ENCODE measurements at regions of chr6 and their contacts with region 1.

Region 1: DNA sequence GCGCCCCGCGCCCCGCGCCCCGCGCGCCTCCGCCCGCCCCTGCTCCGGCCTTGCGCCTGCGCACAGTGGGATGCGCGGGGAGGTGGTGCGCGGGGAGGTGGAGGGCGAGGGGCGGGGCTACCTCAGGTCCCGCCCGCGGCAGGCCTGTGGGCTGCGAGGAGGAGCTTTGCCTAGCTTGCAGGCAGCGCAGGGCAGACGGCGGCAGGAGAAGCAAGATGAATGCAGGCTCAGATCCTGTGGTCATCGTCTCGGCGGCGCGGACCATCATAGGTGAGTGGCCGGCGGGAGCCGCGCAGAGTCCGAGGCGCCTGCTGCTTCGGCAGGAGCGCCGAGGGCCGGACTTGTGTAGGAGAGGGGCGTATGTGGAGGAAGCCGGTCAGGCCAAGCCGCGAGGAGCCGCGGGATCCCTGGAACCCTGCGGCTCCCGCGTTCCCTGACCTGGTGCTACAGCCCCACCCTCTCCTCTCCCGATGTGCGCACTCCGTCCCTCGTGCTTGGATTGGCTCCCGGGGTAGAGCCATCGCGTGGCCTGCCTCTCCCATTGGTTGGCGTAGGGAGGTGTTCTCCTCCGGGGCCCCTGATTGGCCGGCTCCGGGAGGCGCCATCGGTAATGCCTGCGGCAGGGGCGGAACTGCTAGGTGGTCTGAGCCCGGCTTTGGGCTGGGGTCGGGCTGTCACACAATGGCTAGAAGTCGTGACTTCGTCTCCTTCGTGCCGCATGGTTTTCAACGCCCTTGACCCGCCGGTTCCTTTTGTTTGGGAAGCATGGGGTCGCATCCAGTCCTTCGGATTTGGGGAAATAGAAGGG is at the start of gene ACAT2:
- DNase-seq: peak; percentile 79 to 95 (median 90)
- ATAC-seq: peak; percentile 92 to 97 (median 95)
- H3K4me3 ChIP-seq: peak within 1 kb of the TSS; percentile 91 to 97
- H3K4me3 Mint-ChIP-seq: peak within 1 kb of the TSS; percentile 91 to 94 (median 94)
- H3K27ac ChIP-seq: peak within 1 kb of the TSS; percentile 98
- H3K27ac Mint-ChIP-seq: peak within 1 kb of the TSS; percentile 96 to 97
- H3K4me1 ChIP-seq: peaks cover 10 to 16% of the 10 kb centered on the region in 2 experiments
- H3K4me1 Mint-ChIP-seq: peaks cover 23 to 31% (median 29%) of the 10 kb centered on the region in 3 donors
- H3K27me3 ChIP-seq: no peaks in the 10 kb centered on the region
- H3K27me3 Mint-ChIP-seq: no peaks in the 10 kb centered on the region
- total RNA-seq, gene ACAT2: 21.5 to 28.2 (median 27.4) TPM

Region 2: DNA sequence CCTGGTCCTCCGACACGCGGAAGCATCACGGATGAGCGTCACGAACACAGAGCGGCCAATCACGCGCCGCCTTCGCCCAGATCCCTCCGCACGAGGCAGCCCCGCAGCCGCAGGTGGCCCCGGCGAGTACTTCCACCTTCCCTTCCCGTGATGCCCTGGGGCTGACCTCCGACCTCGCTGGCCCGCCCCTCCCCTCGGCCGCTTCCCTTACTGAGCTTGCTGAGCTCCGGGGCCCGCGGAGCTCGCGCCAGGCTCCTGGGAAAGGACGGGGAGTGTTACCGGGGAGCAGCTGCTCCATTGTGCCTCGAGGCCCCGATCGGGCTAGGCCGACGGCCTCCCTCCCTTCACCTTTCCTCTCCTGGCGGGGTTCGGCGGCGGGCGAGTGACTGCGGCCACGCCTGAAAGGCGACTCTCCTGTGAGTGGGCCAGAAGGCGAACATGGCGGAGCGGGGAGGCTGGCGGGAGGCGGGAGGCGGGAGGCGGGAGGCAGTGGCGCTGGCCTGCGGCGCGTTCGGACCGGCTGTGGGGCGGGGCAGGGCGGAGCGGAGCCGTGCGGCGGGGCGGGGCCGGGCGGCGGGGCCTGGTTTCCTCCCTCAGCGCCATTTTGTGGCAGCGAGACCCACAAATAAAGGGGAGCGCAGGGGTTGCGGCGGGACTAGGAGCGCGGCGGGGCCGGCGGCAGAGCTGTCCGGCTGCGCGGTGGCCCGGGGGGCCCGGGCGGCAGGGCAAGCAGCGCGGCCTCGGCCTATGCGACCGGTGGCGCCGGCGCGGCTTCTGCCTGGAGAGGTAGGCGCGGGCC is 35.0 kb before region 1 on chr6 and contains the start of gene WTAP:
- CTCF ChIA-PET with region 1: interaction called, 3 to 5 read pairs
- POLR2A ChIA-PET with region 1: interaction called, 3 to 11 read pairs
- DNase-seq: peak; percentile 93 to 99 (median 96)
- ATAC-seq: peak; percentile 85 to 91 (median 86)
- H3K4me3 ChIP-seq: peak within 1 kb of the TSS; percentile 91 to 93
- H3K4me3 Mint-ChIP-seq: peak within 1 kb of the TSS; percentile 95 to 96 (median 96)
- H3K27ac ChIP-seq: peak within 1 kb of the TSS; percentile 95
- H3K27ac Mint-ChIP-seq: peak within 1 kb of the TSS; percentile 99
- H3K4me1 ChIP-seq: peaks cover 22 to 35% of the 10 kb centered on the region in 2 experiments
- H3K4me1 Mint-ChIP-seq: peaks cover 69 to 71% (median 69%) of the 10 kb centered on the region in 3 donors
- H3K27me3 ChIP-seq: no peaks in the 10 kb centered on the region
- H3K27me3 Mint-ChIP-seq: no peaks in the 10 kb centered on the region
- total RNA-seq, gene WTAP: 119 to 177 (median 126) TPM

Region 3: GRCh38 chr6:159790149-159790955 is 28.3 kb after region 1 on chr6 and contains the start of gene MRPL18:
- CTCF ChIA-PET with region 1: interaction called, 3 to 12 read pairs
- POLR2A ChIA-PET with region 1: interaction called in 1 of 2 experiments, 9 read pairs
- DNase-seq: peak; percentile 69 to 94 (median 86)
- ATAC-seq: peak; percentile 84 to 88 (median 86)
- H3K4me3 ChIP-seq: peak within 1 kb of the TSS; percentile 96
- H3K4me3 Mint-ChIP-seq: peak within 1 kb of the TSS; percentile 96 to 99 (median 98)
- H3K27ac ChIP-seq: peak within 1 kb of the TSS; percentile 96
- H3K27ac Mint-ChIP-seq: peak within 1 kb of the TSS; percentile 97 to 99
- H3K4me1 ChIP-seq: peaks cover 25 to 31% of the 10 kb centered on the region in 2 experiments
- H3K4me1 Mint-ChIP-seq: peaks cover 58 to 69% (median 63%) of the 10 kb centered on the region in 3 donors
- H3K27me3 ChIP-seq: no peaks in the 10 kb centered on the region
- H3K27me3 Mint-ChIP-seq: no peaks in the 10 kb centered on the region
- total RNA-seq, gene MRPL18: 19.8 to 44.4 (median 36.6) TPM

Measured in T-cell (primary cell).